Right ventricle myocardium inferior (tissue), 1 donor: ENCODE measurements at regions of chr19 and their contacts with region 1.

Region 1: GRCh38 chr19:11694533-11695439 is 44.0 kb downstream of the ZNF823 start:
- DNase-seq: peak; percentile 96
- ATAC-seq: peak; percentile 100

Region 2: DNA sequence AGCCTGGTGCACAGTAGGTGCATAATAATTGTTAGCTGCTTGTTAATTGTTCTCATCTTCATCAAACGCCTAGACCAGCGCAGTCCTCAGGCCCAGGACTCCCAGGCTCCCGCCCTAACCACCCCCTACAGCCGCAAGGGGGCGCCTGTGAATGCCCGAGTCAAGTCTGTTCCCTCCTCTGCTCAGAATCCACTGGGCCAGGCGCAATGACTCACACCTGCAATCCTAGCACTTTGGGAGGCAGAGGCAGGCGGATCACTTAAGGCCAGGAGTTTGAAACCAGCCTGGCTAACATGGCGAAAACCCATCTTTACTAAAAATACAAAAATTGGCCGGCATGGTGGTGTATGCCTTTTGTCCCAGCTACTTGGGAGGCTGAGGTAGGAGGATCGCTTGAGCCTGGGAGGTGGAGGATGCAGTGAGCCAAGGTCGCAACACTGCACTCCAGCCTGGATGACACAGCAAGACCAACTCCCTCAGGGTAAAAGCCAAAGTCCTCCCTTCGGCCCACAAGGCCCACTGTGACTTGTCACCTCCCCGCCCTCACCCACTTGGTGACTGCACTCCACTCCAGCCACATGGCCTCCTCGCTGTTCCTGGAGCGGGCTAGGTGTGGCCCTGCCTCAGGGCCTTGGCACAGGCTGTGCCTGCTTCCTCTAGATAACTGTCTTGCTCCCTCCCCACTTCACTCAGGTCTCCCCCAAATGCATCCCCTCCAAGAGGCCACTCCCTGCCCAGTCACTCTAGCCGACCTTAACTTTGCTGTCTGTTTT is 198.2 kb before region 1 on chr19:
- intact Hi-C with region 1: no loop called
- DNase-seq: peak; percentile 77
- ATAC-seq: no peak

Region 3: GRCh38 chr19:11708457-11708856 is 13.7 kb after region 1 on chr19:
- intact Hi-C with region 1: no loop called
- DNase-seq: no peak
- ATAC-seq: no peak

Region 4: DNA sequence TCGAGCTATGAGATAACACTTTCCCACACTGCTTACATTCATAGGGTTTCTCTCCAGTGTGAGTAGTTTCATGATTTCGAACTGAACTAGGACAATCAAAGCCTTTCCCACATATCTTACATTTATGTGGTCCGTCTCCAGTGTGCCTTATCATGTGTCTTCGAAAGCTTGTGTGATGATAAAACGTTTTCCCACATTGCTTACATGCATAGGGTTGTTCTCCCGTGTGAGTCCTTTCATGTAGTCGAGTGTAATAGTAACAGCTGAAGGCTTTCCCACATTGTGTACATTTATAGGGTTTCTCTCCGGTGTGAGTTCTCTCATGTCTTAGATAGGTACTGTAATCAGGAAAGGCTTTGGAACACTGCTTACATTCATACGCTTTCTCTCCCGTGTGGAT is 27.6 kb after region 1 on chr19:
- intact Hi-C with region 1: no loop called
- DNase-seq: no peak
- ATAC-seq: no peak

Region 5: DNA sequence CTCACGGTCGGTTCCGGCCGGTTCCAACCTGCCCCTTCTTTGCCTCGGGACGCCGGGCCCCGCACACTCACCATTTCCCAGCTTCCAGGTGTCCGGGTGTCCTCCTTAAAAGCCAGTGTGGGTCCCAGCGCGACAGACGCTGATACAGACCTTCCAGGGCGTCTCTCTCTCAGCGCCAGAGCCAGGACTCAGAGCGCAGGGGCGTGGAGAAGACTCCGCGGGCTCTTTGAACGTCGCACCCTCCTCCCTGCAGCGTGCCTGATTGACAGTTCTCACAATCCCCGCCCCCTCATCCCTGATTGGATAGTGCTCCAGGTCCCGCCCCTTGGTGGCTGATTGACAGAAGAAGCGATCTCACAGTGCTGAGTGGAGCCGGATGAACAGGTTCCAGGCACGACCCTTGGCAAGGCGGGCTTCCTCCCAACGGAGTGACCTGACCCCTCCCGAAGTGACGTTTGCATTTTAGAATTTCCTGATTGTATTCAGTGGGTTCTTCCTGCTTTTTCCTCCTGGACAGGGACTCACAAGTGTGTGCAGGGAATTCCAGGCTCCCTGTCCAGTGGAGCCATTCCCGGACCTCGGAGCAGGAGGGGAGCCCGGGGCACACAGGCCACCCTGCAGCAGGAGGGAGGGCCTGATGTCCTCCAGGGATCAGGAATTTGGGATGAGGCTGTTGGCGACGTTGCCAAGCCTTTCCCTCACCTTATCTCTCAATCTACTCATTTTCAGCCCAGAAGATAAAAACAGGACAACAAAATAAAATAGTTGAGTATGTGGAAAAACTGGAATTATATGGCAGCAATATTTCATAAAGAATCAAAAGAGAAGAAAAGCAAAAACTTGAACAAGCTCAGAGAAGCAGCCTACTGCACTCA is 44.2 kb after region 1 on chr19 and contains the start of gene ZNF823:
- intact Hi-C with region 1: loop called (anchors 1 kb)
- DNase-seq: peak; percentile 97
- ATAC-seq: peak; percentile 99
- total RNA-seq, gene ZNF823: 4.2 TPM